ENCODE measurements at regions of chr4 and their contacts with region 1.

Region 1: DNA sequence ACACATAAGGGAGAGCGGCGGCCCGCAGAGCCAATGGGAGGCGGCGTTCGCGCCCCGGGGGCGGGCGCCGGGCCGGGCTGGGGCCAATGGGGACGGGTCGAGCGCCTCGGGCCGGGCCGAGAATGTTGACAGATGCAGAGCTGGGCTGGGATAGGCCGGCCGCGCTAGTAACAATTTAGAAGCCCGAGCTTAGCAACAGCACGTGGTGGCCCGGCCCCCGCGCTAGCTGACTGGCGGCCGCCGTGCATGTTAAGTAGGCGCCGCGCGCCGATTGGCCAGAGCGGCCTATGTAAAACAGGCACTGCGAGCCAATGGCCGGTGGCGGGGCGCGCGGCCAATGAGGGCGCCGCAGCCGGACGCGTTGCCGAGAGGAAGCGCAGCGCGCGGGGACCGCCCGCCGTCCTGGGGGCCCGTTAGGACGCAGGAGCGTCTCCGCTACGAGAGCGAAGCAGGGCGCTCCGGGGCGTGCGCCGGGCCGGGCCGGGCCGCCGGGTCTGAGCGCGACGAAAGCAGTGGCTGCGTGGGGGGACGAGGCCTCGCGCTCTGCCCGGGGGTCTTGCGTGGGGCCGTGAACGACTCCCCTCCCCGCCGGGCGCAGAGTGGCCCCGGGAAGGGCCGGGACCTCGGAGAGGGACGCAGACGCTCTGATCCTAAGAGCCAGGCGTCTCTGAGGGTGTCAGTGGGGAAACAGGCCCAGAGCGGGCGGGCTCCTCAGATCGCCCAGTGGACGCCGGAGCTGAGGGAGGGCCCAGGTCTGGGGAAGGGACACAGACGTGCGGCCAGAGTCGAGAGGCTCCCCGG is 434 bp upstream of the MXD4 start:
- DNase-seq: peak; percentile 99
- ATAC-seq: peak; percentile 96
- H3K4me3 Mint-ChIP-seq: peak overlapping the region; percentile 61
- H3K27ac Mint-ChIP-seq: no peak overlapping the region
- H3K4me1 Mint-ChIP-seq: peaks cover 2% of the 10 kb centered on the region
- H3K27me3 Mint-ChIP-seq: no peaks in the 10 kb centered on the region

Region 2: DNA sequence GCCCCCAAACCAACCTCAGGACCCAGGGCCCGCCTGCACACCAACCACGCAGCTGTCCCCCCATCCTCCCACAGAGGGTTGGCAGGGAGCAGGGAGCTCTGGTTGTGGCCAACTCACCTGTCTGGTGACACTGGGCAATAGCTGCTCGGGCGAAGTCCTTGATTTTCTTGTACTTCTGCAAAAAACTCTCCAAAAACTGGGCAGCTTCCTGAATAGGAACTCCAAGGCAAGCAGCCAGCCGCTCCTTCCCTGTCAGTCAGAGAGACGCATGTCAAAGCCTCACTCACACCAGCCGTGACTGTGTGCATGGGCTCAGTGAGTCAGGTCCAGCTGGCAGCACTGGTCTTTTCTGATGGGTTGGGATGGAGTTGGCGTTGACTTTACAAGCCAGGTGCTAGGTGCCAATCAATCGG is 176.8 kb before region 1 on chr4:
- CTCF ChIA-PET with region 1: no interaction called
- POLR2A ChIA-PET with region 1: no interaction called
- intact Hi-C with region 1: no loop called
- DNase-seq: no peak
- ATAC-seq: no peak
- H3K4me3 Mint-ChIP-seq: no peak overlapping the region
- H3K27ac Mint-ChIP-seq: no peak overlapping the region
- H3K4me1 Mint-ChIP-seq: no peaks in the 10 kb centered on the region
- H3K27me3 Mint-ChIP-seq: peaks cover 2% of the 10 kb centered on the region

Region 3: GRCh38 chr4:2220016-2220630 is 42.2 kb before region 1 on chr4:
- CTCF ChIA-PET with region 1: interaction called, 4 read pairs
- POLR2A ChIA-PET with region 1: no interaction called
- intact Hi-C with region 1: loop called in 1 of 2 experiments (anchors 1 kb)
- DNase-seq: peak; percentile 88
- ATAC-seq: peak; percentile 95
- H3K4me3 Mint-ChIP-seq: no peak overlapping the region
- H3K27ac Mint-ChIP-seq: no peak overlapping the region
- H3K4me1 Mint-ChIP-seq: no peaks in the 10 kb centered on the region
- H3K27me3 Mint-ChIP-seq: no peaks in the 10 kb centered on the region

Region 4: GRCh38 chr4:2364654-2365053 is 102.3 kb after region 1 on chr4:
- CTCF ChIA-PET with region 1: no interaction called
- POLR2A ChIA-PET with region 1: no interaction called
- intact Hi-C with region 1: loop called in 1 of 2 experiments (anchors 1 kb)
- DNase-seq: peak; percentile 80
- ATAC-seq: peak; percentile 86
- H3K4me3 Mint-ChIP-seq: peak overlapping the region; percentile 61
- H3K27ac Mint-ChIP-seq: peak overlapping the region; percentile 25
- H3K4me1 Mint-ChIP-seq: peaks cover 4% of the 10 kb centered on the region
- H3K27me3 Mint-ChIP-seq: no peaks in the 10 kb centered on the region

Region 5: GRCh38 chr4:2436301-2436700 is 174.0 kb after region 1 on chr4:
- CTCF ChIA-PET with region 1: no interaction called
- POLR2A ChIA-PET with region 1: no interaction called
- intact Hi-C with region 1: no loop called
- DNase-seq: no peak
- ATAC-seq: no peak
- H3K4me3 Mint-ChIP-seq: no peak overlapping the region
- H3K27ac Mint-ChIP-seq: no peak overlapping the region
- H3K4me1 Mint-ChIP-seq: no peaks in the 10 kb centered on the region
- H3K27me3 Mint-ChIP-seq: no peaks in the 10 kb centered on the region

Region 6: GRCh38 chr4:2462218-2462991 is 200.1 kb after region 1 on chr4:
- CTCF ChIA-PET with region 1: no interaction called
- POLR2A ChIA-PET with region 1: no interaction called
- intact Hi-C with region 1: loop called in 1 of 2 experiments (anchors 1 kb)
- DNase-seq: peak; percentile 80
- ATAC-seq: peak; percentile 98
- H3K4me3 Mint-ChIP-seq: peak overlapping the region; percentile 68
- H3K27ac Mint-ChIP-seq: no peak overlapping the region
- H3K4me1 Mint-ChIP-seq: peaks cover 12% of the 10 kb centered on the region
- H3K27me3 Mint-ChIP-seq: peaks cover 3% of the 10 kb centered on the region

Region 7: DNA sequence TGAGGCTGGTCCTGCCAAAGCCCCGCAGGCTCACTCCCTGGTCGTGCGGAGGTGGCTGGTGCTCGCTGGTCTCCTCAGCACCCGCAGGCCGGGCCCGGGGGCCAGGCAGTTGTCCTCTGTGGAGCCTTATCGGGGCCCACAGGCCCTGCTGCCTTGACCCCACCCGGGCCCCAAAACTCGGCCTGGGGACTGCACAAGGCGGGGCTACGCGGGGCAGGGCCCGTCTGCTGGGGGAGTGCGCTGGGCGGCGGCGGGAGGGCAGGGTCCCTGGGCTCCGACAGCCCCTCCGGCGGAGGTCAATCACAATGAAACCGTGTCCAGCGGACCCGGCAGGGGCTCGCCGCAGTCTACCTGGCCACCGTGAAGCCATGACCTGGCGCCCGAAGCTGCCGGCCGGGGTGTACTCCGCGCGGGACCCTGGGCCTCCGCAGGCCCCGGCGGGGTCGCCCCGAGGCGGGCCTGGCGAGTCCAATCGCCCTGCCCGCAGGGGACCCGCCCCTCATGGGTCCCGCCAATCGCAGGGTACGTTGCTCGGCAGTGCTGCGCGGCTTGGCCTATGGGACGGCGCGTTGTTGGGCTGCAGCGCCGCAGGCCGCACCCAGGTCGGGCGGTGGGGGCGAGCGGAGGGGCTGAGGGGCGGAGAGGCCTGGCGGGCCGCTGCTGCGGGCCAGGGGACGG is 581.1 kb after region 1 on chr4 and contains the start of gene ADD1:
- CTCF ChIA-PET with region 1: no interaction called
- POLR2A ChIA-PET with region 1: no interaction called
- intact Hi-C with region 1: loop called in 1 of 2 experiments (anchors 5 kb)
- DNase-seq: peak; percentile 94
- ATAC-seq: peak; percentile 88
- H3K4me3 Mint-ChIP-seq: peak within 1 kb of the TSS; percentile 88
- H3K27ac Mint-ChIP-seq: peak within 1 kb of the TSS; percentile 89
- H3K4me1 Mint-ChIP-seq: peaks cover 56% of the 10 kb centered on the region
- H3K27me3 Mint-ChIP-seq: no peaks in the 10 kb centered on the region
- total RNA-seq, gene ADD1: 196 to 206 TPM

Region 8: DNA sequence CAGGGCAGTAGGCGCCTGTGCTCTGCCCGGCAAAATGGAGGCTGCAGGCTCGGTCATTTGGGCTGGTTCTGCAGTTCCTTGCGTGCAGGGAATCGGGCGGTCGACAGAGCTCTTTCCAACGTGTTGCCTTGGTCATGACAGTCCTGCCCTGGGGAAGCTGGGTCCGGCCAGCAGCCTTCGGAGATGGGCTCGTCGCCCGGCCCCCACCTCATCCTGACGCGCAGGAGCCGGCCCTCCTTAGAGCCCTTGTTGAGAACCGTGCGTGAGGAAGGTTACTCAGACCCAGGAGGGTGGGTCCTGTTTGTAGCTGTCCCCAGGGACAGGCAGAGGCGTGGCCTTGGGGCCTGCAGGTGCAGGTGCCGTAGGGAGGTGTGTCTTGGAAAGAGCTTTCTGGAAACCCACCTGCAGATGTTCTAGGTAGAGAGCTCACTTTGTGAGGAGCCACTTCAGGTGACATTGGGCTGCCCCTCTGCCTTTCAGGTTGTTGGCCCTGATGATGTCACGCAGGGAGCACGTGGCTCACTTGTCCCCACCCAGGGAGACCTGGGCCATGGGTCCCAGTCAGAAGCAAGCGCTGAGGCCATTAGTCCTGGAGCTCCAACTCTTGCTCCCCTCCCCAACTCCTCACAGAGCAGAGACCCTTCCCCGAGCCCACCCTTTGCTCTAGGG is 1164.3 kb after region 1 on chr4:
- CTCF ChIA-PET with region 1: no interaction called
- POLR2A ChIA-PET with region 1: no interaction called
- intact Hi-C with region 1: no loop called
- DNase-seq: no peak
- ATAC-seq: no peak
- H3K4me3 Mint-ChIP-seq: no peak overlapping the region
- H3K27ac Mint-ChIP-seq: no peak overlapping the region
- H3K4me1 Mint-ChIP-seq: no peaks in the 10 kb centered on the region
- H3K27me3 Mint-ChIP-seq: no peaks in the 10 kb centered on the region